Gastrocnemius medialis (tissue), 4 donors: ENCODE measurements at regions of chr10 and their contacts with region 1.

Region 1: DNA sequence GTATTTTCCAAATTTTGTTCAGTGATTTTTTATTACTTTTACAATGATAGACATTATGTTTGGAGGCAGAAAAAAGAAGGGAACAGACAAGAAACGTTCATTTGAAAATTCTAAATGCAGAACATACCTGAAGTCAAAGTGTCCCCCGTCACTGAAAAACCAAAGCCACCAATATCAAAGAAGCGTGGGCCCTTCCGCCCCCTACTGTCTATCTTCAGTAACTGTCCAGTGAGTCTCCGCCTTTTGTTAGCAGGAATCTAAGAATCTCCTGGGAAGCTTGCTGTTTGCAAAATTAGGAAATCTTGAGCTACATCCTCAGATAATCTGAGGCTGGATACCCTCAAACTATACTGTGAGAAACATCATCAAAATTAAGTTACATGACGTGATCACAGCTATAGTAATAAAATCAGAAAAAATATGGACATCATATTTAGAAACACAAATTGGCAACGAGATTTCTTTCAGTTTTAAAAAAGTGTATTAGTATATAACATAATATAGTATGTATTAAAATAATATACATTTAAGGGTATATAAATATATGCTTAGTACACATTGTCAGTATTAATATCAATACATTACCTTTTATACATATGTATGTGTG is 169.3 kb upstream of the AKR1E2 start:
- DNase-seq: peak; percentile 53 to 55
- ATAC-seq: peak; percentile 53 to 59
- H3K4me3 ChIP-seq: no peak overlapping the region
- H3K27ac ChIP-seq: peak overlapping the region in 1 of 4 donors; percentile 16
- H3K4me1 ChIP-seq: peaks cover 16% of the 10 kb centered on the region in 2 donors
- H3K27me3 ChIP-seq: no peaks in the 10 kb centered on the region
- CTCF ChIP-seq: peak; percentile 84 to 95 (median 89)
- POLR2A ChIP-seq: no peak

Region 2: GRCh38 chr10:3197348-3198003 is 1459.2 kb before region 1 on chr10:
- in situ Hi-C with region 1: no loop called
- intact Hi-C with region 1: loop called (anchors 5 kb)
- DNase-seq: peak; percentile 66 to 73
- ATAC-seq: peak; percentile 88 to 90
- H3K4me3 ChIP-seq: peak overlapping the region; percentile 20 to 37 (median 30)
- H3K27ac ChIP-seq: no peak overlapping the region
- H3K4me1 ChIP-seq: peaks cover 5 to 7% of the 10 kb centered on the region in 2 donors
- H3K27me3 ChIP-seq: no peaks in the 10 kb centered on the region
- CTCF ChIP-seq: peak; percentile 80 to 96 (median 90)
- POLR2A ChIP-seq: no peak

Region 3: GRCh38 chr10:3239066-3239919 is 1417.4 kb before region 1 on chr10:
- in situ Hi-C with region 1: loop called in 2 of 4 experiments (anchors 25 kb)
- intact Hi-C with region 1: loop called (anchors 5 kb)
- DNase-seq: peak; percentile 38 to 46
- ATAC-seq: peak; percentile 80 to 90
- H3K4me3 ChIP-seq: no peak overlapping the region
- H3K27ac ChIP-seq: peak overlapping the region in 3 of 4 donors; percentile 56 to 66 (median 59)
- H3K4me1 ChIP-seq: no peaks in the 10 kb centered on the region
- H3K27me3 ChIP-seq: no peaks in the 10 kb centered on the region
- CTCF ChIP-seq: peak; percentile 78 to 91 (median 86)
- POLR2A ChIP-seq: no peak

Region 4: DNA sequence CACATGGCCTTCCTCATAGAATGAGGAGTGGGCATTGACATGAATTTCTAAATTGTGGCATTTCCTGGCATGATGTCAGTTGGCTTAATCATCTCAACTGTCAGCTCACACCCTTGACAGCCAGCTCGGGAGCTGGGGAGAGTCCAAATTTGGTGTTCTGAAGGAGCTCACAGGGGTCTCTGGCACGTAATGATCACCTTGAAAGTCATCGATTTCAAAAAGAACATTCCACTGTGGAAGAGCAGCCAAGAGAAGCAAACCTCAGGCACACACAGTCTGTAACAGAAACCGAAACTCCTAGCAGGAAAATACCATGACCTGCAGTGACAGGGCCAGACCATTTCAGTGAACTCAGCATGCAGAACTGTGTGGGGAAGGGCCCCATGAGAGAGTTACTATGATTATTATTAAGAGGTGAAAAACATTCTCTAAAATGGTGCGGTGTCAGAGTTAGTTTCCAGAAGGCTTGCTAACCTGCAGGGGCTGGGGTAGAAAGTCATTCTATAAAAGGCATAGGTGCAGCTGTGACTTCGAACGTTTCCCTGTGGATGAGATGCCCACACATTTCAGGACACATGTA is 845.3 kb before region 1 on chr10:
- in situ Hi-C with region 1: loop called in 2 of 4 experiments (anchors 5 to 25 kb)
- intact Hi-C with region 1: loop called (anchors 1 kb)
- DNase-seq: peak in 1 of 2 donors; percentile 61
- ATAC-seq: peak; percentile 33 to 58
- H3K4me3 ChIP-seq: peak overlapping the region in 3 of 4 donors; percentile 17 to 26 (median 18)
- H3K27ac ChIP-seq: peak overlapping the region; percentile 85 to 96 (median 90)
- H3K4me1 ChIP-seq: peaks cover 45 to 46% of the 10 kb centered on the region in 2 donors
- H3K27me3 ChIP-seq: no peaks in the 10 kb centered on the region
- CTCF ChIP-seq: no peak
- POLR2A ChIP-seq: peak in 1 of 2 donors; percentile 42

Region 5: GRCh38 chr10:3887885-3888476 is 768.7 kb before region 1 on chr10:
- in situ Hi-C with region 1: no loop called
- intact Hi-C with region 1: loop called (anchors 10 kb)
- DNase-seq: peak; percentile 24 to 32
- ATAC-seq: peak; percentile 43 to 58
- H3K4me3 ChIP-seq: no peak overlapping the region
- H3K27ac ChIP-seq: peak overlapping the region; percentile 72 to 82 (median 78)
- H3K4me1 ChIP-seq: peaks cover 16 to 21% of the 10 kb centered on the region in 2 donors
- H3K27me3 ChIP-seq: no peaks in the 10 kb centered on the region
- CTCF ChIP-seq: no peak
- POLR2A ChIP-seq: no peak

Region 6: GRCh38 chr10:4061441-4061951 is 595.2 kb before region 1 on chr10:
- in situ Hi-C with region 1: no loop called
- intact Hi-C with region 1: loop called (anchors 5 kb)
- DNase-seq: peak; percentile 69
- ATAC-seq: peak; percentile 91 to 92
- H3K4me3 ChIP-seq: no peak overlapping the region
- H3K27ac ChIP-seq: peak overlapping the region; percentile 39 to 66 (median 52)
- H3K4me1 ChIP-seq: peaks cover 13 to 15% of the 10 kb centered on the region in 2 donors
- H3K27me3 ChIP-seq: no peaks in the 10 kb centered on the region
- CTCF ChIP-seq: no peak
- POLR2A ChIP-seq: peak in 1 of 2 donors; percentile 14

Region 7: GRCh38 chr10:4344511-4344994 is 312.1 kb before region 1 on chr10:
- in situ Hi-C with region 1: no loop called
- intact Hi-C with region 1: loop called (anchors 2 kb)
- DNase-seq: peak; percentile 68 to 77
- ATAC-seq: peak; percentile 97 to 98
- H3K4me3 ChIP-seq: no peak overlapping the region
- H3K27ac ChIP-seq: peak overlapping the region; percentile 60 to 89 (median 76)
- H3K4me1 ChIP-seq: peaks cover 19 to 23% of the 10 kb centered on the region in 2 donors
- H3K27me3 ChIP-seq: no peaks in the 10 kb centered on the region
- CTCF ChIP-seq: peak in 3 of 5 experiments; percentile 10 to 25 (median 13)
- POLR2A ChIP-seq: no peak

Region 8: DNA sequence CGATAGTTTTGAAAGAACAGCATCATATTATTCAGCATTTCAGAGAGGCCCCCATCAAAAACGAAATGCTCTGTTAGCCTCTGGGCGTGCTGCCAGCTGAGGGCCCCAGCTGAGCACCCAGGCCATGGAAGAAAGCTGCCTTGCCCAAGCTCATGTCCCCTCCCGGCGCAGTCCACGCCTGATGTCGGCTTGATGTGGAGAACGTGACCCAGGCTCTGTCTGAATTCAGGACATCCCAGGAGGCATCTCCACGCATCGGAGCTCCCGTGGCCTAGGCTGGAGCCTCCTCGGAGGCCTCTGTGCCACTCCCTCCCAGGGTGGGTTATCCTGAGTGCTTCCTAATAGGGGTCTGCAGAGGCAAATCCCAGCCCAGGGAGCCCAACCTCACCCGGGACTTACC is 49.0 kb before region 1 on chr10:
- in situ Hi-C with region 1: no loop called
- intact Hi-C with region 1: no loop called
- DNase-seq: no peak
- ATAC-seq: no peak
- H3K4me3 ChIP-seq: no peak overlapping the region
- H3K27ac ChIP-seq: no peak overlapping the region
- H3K4me1 ChIP-seq: no peaks in the 10 kb centered on the region
- H3K27me3 ChIP-seq: no peaks in the 10 kb centered on the region
- CTCF ChIP-seq: no peak
- POLR2A ChIP-seq: no peak

Region 9: DNA sequence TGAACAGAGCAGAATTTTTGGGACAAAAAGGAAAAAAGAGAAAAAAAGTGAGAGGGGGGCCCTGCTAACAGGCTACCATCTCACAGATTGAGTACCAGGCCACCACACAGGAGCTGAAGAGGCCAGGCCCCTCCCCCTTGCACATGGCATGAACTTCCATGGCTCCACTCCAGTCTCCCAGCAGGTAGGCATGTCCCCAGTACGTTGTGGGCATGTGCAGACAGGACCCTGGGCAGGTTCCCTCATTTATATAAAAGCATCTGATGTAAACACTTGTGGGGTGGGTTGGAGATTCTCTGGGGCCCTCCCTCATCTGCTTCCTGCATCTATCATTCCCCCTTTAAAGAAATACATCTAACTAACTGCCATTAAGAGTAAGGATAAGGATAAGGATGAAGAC is 261.6 kb after region 1 on chr10:
- in situ Hi-C with region 1: no loop called
- intact Hi-C with region 1: no loop called
- DNase-seq: no peak
- ATAC-seq: no peak
- H3K4me3 ChIP-seq: no peak overlapping the region
- H3K27ac ChIP-seq: no peak overlapping the region
- H3K4me1 ChIP-seq: no peaks in the 10 kb centered on the region
- H3K27me3 ChIP-seq: no peaks in the 10 kb centered on the region
- CTCF ChIP-seq: no peak
- POLR2A ChIP-seq: no peak